ENCODE measurements at regions of chr11 and their contacts with region 1.

Region 1: DNA sequence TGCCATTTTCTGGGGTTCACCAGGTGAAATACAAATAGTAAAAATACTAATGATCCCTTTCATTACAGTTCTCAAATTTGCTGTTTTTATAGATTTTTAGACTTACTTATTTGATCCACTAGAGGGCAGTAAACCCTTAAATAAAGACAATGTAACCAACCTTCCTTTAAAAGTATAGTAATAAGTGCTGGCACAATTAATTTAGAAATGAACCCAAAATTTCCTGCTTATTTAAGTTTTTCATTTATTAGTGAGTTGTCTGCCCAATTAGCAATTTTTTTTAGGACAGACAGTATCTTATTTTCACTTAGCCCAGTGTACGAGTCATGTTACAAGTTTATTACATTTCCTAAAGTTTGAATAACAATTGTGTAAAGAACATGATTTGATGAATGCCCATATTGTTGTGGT is 4.7 kb downstream of the DDIAS start:
- DNase-seq: peak in 2 of 9 experiments; percentile 38 to 61
- ATAC-seq: no peak
- H3K4me3 ChIP-seq: no peak overlapping the region
- H3K4me3 Mint-ChIP-seq: no peak overlapping the region
- H3K27ac ChIP-seq: no peak overlapping the region
- H3K27ac Mint-ChIP-seq: peak overlapping the region; percentile 19
- H3K4me1 ChIP-seq: peaks cover 28% of the 10 kb centered on the region
- H3K4me1 Mint-ChIP-seq: peaks cover 38% of the 10 kb centered on the region
- H3K27me3 ChIP-seq: no peaks in the 10 kb centered on the region
- H3K27me3 Mint-ChIP-seq: no peaks in the 10 kb centered on the region
- CTCF ChIP-seq: peak; percentile 72

Region 2: GRCh38 chr11:82988936-82989627 is 82.8 kb after region 1 on chr11:
- CTCF ChIA-PET with region 1: interaction called, 16 read pairs
- POLR2A ChIA-PET with region 1: interaction called, 3 read pairs
- intact Hi-C with region 1: loop called (anchors 1 to 2 kb)
- DNase-seq: no peak
- ATAC-seq: no peak
- H3K4me3 ChIP-seq: no peak overlapping the region
- H3K4me3 Mint-ChIP-seq: no peak overlapping the region
- H3K27ac ChIP-seq: no peak overlapping the region
- H3K27ac Mint-ChIP-seq: peak overlapping the region; percentile 8
- H3K4me1 ChIP-seq: peaks cover 3% of the 10 kb centered on the region
- H3K4me1 Mint-ChIP-seq: peaks cover 28% of the 10 kb centered on the region
- H3K27me3 ChIP-seq: no peaks in the 10 kb centered on the region
- H3K27me3 Mint-ChIP-seq: no peaks in the 10 kb centered on the region
- CTCF ChIP-seq: no peak

Region 3: GRCh38 chr11:83374311-83374710 is 468.1 kb after region 1 on chr11:
- CTCF ChIA-PET with region 1: no interaction called
- POLR2A ChIA-PET with region 1: no interaction called
- intact Hi-C with region 1: no loop called
- DNase-seq: no peak
- ATAC-seq: no peak
- H3K4me3 ChIP-seq: no peak overlapping the region
- H3K4me3 Mint-ChIP-seq: no peak overlapping the region
- H3K27ac ChIP-seq: no peak overlapping the region
- H3K27ac Mint-ChIP-seq: no peak overlapping the region
- H3K4me1 ChIP-seq: no peaks in the 10 kb centered on the region
- H3K4me1 Mint-ChIP-seq: no peaks in the 10 kb centered on the region
- H3K27me3 ChIP-seq: no peaks in the 10 kb centered on the region
- H3K27me3 Mint-ChIP-seq: peaks cover 5% of the 10 kb centered on the region
- CTCF ChIP-seq: no peak

Region 4: GRCh38 chr11:83862691-83863090 is 956.4 kb after region 1 on chr11:
- CTCF ChIA-PET with region 1: no interaction called
- POLR2A ChIA-PET with region 1: no interaction called
- intact Hi-C with region 1: no loop called
- DNase-seq: no peak
- ATAC-seq: no peak
- H3K4me3 ChIP-seq: no peak overlapping the region
- H3K4me3 Mint-ChIP-seq: no peak overlapping the region
- H3K27ac ChIP-seq: no peak overlapping the region
- H3K27ac Mint-ChIP-seq: no peak overlapping the region
- H3K4me1 ChIP-seq: no peaks in the 10 kb centered on the region
- H3K4me1 Mint-ChIP-seq: no peaks in the 10 kb centered on the region
- H3K27me3 ChIP-seq: no peaks in the 10 kb centered on the region
- H3K27me3 Mint-ChIP-seq: no peaks in the 10 kb centered on the region
- CTCF ChIP-seq: no peak